Activated CD4-positive, alpha-beta T cell treated with anti-CD3 and anti-CD28 coated beads, Interleukin-2, amount 10 ng/mL, durations not matched to agents 24 days and 14 days (primary cell): ENCODE measurements at regions of chr1 and their contacts with region 1.

Region 1: DNA sequence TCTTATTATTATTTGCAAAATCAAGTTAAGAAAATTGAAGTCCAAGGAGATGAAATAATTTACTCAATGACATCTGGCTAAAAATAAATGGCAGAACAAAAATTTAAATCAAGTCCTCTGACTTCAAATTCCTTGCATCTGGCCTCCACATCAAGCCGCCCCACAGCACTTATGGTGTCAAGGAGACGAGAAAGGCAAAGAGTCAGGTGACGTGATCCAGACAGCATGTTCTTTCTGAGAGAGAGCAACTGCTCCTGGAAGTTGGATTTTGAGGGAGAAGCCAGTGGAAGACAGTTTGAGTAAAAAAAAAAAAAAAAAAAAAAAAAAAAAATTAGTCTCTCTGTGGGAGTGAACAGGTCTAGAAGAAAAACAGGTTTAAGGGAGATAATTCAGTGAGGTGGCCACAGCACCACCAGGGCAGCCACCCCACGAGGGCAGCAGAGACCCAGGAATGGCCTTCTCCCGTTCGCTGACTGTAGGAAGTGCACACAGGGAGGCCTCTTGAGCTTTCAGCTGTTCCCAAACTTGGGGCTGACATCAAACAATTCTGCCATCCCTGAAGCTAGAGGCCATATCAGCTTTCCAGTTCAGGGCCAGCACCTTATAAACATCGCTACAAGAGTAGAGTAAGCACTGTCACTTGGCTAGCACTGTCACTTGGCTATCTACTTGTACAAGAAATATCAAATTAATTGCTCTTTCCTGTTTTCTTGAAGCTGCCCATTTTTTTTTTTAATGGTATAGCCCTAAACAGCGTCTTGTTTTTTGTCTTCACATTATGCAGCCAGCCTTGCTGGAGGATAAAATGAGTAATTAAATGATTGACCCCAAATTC is 7.8 kb downstream of the C1orf162 start:
- DNase-seq: peak; percentile 89
- H3K4me3 Mint-ChIP-seq: no peak overlapping the region
- H3K27ac Mint-ChIP-seq: no peak overlapping the region
- H3K4me1 Mint-ChIP-seq: peaks cover 23% of the 10 kb centered on the region
- H3K27me3 Mint-ChIP-seq: peaks cover 16% of the 10 kb centered on the region

Region 2: DNA sequence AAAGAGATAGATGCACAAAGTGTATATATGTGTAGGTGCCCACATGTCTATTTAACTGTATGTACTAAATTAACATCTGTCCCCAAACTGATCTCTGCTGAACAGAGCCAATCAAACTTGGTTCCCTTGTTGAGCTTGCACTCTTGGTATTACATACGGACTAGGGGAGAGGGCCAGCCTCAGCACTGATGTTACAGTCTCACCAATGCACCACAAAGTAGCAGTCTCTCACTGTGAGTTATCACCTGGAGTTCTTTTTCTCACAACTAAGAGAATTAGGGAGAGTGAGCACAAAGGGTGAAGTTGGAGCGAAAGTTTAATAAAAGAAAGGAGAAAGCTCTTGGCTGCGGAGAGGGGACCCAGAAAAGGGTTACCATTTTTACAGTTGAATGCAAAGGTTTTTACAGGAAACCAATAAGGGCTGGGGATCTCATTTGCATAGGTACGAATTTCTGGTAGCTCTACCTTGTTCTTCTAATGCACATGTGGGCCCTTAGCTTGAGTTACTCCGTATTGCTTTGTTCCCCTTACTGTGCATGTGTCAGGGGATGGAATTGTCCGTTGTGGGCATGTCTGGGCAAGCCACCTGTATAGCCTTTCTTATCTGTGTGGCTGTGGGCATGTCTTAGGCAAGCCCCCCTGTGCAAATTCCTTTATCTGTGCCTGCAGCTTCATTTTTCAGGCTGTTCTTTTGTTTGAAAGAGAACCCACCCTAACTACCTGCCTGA is 267.4 kb before region 1 on chr1:
- intact Hi-C with region 1: loop called (anchors 2 kb)
- DNase-seq: peak; percentile 76
- H3K4me3 Mint-ChIP-seq: peak overlapping the region; percentile 84
- H3K27ac Mint-ChIP-seq: peak overlapping the region; percentile 92
- H3K4me1 Mint-ChIP-seq: peaks cover 69% of the 10 kb centered on the region
- H3K27me3 Mint-ChIP-seq: no peaks in the 10 kb centered on the region

Region 3: DNA sequence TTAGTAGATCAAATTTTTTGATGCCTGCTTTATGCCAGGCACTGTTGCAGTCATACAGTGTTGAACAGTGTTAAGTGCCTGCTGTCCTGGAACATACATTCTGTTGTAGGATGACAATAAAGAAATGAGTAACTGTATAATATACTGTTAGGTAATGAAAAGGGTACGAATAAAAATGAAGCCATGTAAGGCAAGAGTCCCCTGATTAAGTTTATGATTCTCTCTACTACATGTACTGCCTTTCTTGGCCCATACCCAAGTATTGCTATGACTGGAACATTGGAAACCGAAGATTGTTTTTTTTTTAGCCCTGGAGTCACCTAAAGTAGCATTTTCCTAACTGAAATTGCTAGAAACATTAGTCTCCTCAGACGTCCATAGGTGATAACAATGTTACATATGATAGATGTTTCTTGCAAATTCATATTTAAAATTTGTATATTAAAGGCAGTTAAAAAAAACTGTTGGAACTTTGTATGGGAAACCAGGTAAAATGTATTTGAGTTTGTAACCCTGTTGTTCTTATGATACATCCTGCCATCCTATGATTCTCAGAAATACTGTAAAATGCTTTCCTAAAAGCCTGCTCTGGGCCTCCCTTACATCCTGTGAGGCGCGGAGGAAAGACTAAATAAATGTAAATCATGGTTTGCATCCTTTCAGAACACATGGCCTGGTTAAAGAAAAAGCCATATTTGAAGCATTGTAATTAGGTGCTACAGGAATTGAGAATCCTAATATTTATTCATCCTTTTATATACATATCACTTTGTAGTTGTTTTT is 26.6 kb before region 1 on chr1:
- intact Hi-C with region 1: loop called (anchors 2 kb)
- DNase-seq: no peak
- H3K4me3 Mint-ChIP-seq: peak overlapping the region; percentile 69
- H3K27ac Mint-ChIP-seq: peak overlapping the region; percentile 84
- H3K4me1 Mint-ChIP-seq: peaks cover 64% of the 10 kb centered on the region
- H3K27me3 Mint-ChIP-seq: no peaks in the 10 kb centered on the region

Region 4: GRCh38 chr1:111497592-111497991 is 16.0 kb after region 1 on chr1:
- intact Hi-C with region 1: loop called (anchors 2 kb)
- DNase-seq: no peak
- H3K4me3 Mint-ChIP-seq: no peak overlapping the region
- H3K27ac Mint-ChIP-seq: peak overlapping the region; percentile 42
- H3K4me1 Mint-ChIP-seq: peaks cover 22% of the 10 kb centered on the region
- H3K27me3 Mint-ChIP-seq: peaks cover 2% of the 10 kb centered on the region

Region 5: DNA sequence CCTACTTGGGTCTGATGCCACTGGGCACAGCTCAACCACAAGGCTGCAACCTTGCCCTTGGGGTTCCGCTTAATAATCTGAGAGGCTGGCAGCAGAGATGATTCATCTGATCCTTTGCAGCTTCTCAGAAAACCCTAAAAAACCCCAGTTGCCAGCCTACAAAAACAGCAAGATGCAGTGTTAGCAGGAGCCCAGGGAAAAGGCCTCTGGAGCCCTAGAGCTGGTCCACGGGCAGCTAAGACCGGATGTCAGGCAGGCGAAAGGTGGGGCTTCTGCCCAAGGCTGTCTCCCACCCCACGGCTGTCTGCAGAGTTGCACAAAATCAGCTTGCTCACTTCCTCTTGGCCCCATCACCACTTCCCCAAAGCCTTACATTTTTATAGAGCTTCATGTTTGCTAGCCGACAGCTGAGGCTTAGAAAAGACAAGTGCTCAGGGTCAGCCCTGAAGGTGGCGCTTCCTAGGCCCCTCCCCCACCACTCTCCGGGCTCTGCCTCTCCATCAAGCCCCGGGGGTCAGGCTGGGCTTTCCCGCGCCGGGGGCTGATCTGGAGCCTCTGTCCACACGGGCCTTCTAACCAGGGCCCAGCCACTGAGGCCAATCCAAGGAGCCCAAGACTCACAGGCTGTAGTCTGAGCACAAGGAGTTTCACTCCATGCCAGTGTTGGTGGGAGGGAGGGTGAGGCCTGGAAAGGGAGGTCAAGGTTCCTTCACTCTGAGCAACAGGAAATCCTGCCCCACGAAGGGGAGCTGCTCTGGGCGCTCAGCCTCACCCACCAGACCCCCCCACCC is 26.0 kb after region 1 on chr1:
- intact Hi-C with region 1: loop called (anchors 1 kb)
- DNase-seq: peak; percentile 88
- H3K4me3 Mint-ChIP-seq: peak overlapping the region; percentile 79
- H3K27ac Mint-ChIP-seq: peak overlapping the region; percentile 94
- H3K4me1 Mint-ChIP-seq: peaks cover 66% of the 10 kb centered on the region
- H3K27me3 Mint-ChIP-seq: no peaks in the 10 kb centered on the region

Region 6: GRCh38 chr1:111747282-111747734 is 265.7 kb after region 1 on chr1:
- intact Hi-C with region 1: loop called (anchors 1 kb)
- DNase-seq: peak; percentile 93
- H3K4me3 Mint-ChIP-seq: no peak overlapping the region
- H3K27ac Mint-ChIP-seq: no peak overlapping the region
- H3K4me1 Mint-ChIP-seq: peaks cover 18% of the 10 kb centered on the region
- H3K27me3 Mint-ChIP-seq: peaks cover 23% of the 10 kb centered on the region

Region 7: DNA sequence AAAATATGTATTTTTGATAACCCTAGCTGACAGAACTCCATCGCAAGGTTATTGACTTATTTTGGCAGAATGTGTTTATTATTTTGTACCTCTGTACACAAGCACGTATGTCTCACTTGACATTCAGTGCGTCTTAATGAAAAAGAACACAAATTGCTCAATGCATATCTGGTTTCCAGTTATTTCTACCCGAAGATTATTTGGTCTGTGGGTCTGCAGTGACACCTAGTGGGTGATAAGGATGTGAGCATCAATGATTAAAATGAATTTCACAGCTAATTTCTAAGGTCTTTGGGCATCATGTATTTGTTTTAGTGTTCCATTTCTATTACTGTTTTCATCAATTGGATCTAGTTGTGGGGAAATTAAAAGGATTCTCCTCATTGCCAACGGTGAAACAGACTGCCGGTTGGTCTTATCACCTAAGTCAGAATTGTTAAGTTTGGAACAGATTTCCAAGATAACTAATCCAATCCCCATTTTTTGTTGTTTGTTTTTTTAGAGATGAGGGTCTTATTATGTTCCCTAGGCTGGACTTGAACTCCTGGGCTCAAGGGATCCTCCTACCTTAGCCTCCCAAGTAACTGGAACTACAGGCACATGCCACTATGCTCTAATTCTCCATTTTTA is 288.0 kb after region 1 on chr1:
- intact Hi-C with region 1: loop called (anchors 1 kb)
- DNase-seq: peak; percentile 84
- H3K4me3 Mint-ChIP-seq: no peak overlapping the region
- H3K27ac Mint-ChIP-seq: no peak overlapping the region
- H3K4me1 Mint-ChIP-seq: peaks cover 1% of the 10 kb centered on the region
- H3K27me3 Mint-ChIP-seq: no peaks in the 10 kb centered on the region

Region 8: DNA sequence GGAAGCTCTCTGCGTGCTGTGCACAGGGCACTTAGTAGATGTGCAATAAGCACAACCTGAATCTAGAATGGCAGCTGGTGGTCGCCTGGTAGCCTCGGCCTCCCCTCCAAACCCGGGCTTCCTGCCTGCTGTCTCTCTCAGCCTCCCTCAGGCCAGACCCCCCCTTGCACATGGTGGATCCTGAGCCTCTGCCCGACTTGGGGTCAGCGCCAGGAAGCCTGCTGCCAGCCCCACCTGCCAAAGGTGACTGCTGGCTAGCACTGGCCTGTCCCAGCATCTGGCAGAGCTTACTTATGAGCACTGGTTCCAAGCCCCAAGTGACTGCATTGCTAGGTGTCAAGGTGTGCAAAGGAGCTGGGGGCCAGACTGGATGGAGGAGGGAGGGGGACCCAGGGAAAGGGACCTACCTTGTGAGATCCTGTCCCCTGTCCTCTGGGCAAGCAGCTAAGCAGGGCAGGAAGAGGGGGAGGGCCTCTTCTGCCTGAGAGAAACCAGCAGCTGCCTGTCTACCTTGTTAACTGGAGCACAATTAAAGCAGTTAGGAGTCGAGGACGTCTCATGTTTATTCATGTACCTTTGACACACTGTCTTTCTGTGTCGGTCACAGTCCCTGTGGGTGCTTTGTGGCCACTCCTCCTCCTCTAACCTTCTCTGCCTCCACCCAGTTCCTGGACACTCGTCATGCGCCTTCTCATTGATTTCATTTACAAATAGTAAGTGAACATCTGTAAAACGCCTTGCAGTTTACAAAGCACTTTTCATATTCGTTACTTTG is 375.0 kb after region 1 on chr1:
- intact Hi-C with region 1: no loop called
- DNase-seq: no peak
- H3K4me3 Mint-ChIP-seq: no peak overlapping the region
- H3K27ac Mint-ChIP-seq: no peak overlapping the region
- H3K4me1 Mint-ChIP-seq: no peaks in the 10 kb centered on the region
- H3K27me3 Mint-ChIP-seq: peaks cover 6% of the 10 kb centered on the region